Heart left ventricle (tissue), 16 donors: ENCODE measurements at regions of chr22 and their contacts with region 1.

Region 1: GRCh38 chr22:37544955-37545699 is 15.2 kb upstream of the CDC42EP1 start:
- DNase-seq: peak; percentile 72 to 80 (median 75)
- ATAC-seq: peak; percentile 18 to 63 (median 54)
- H3K4me3 ChIP-seq: peak overlapping the region in 9 of 12 donors; percentile 16 to 40 (median 29)
- H3K27ac ChIP-seq: peak overlapping the region; percentile 75 to 97 (median 90)
- H3K4me1 ChIP-seq: peaks cover 3 to 53% (median 38%) of the 10 kb centered on the region in 12 donors
- H3K27me3 ChIP-seq: no peaks in the 10 kb centered on the region
- CTCF ChIP-seq: peak; percentile 56 to 79 (median 72)
- POLR2A ChIP-seq: no peak

Region 2: DNA sequence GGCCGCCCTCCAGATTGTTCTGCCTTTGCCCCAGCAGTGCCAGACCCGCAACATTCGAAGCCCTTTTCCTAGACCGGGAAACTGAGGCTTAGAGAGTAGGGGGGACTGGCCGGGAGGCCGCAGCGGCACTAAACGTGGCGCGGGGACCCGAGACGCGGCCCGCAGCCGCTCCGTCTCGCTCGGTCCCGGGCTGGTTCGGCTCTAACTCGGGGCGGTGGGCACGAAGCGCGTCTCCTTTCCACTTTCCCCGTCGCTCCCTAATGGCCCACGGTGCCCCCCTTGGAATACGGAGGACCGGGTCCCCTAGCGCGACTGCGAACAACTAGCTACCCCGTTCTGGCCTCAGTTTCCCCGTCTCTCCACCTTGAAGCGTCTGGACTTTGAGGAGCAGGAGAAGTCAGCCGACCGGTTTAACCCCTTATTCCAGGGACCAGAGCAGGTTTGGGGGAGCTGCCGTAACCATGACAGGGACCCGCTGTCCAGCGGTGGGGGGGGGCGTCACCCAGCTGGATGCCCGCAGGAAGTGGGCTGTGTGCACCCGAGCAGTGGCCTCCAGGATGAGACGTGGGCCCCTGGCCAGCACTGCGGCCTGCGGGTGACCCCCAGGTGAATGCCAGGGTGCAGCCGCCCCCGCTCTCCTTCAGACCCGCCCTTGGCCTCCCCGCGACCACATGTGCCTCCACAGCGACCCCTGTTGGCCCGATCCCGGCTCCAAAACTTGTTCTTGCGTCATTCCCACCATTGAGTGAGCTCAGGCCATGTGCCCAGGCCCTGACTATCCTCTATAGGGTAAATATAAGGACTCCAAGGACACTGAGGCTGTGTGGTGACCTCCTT is 16.3 kb after region 1 on chr22:
- intact Hi-C with region 1: loop called in 7 of 10 experiments (anchors 1 to 2 kb)
- DNase-seq: peak; percentile 89 to 93 (median 92)
- ATAC-seq: peak; percentile 56 to 76 (median 66)
- H3K4me3 ChIP-seq: peak overlapping the region; percentile 60 to 93 (median 68)
- H3K27ac ChIP-seq: peak overlapping the region; percentile 90 to 100 (median 97)
- H3K4me1 ChIP-seq: peaks cover 18 to 93% (median 72%) of the 10 kb centered on the region in 12 donors
- H3K27me3 ChIP-seq: peaks cover 0 to 30% (median 0%) of the 10 kb centered on the region in 9 donors
- CTCF ChIP-seq: peak; percentile 75 to 93 (median 84)
- POLR2A ChIP-seq: no peak

Region 3: GRCh38 chr22:37566903-37567820 is 22.0 kb after region 1 on chr22:
- intact Hi-C with region 1: loop called in 6 of 10 experiments (anchors 1 to 2 kb)
- DNase-seq: peak; percentile 75 to 91 (median 79)
- ATAC-seq: peak; percentile 32 to 67 (median 50)
- H3K4me3 ChIP-seq: no peak overlapping the region
- H3K27ac ChIP-seq: peak overlapping the region in 10 of 12 donors; percentile 43 to 100 (median 64)
- H3K4me1 ChIP-seq: peaks cover 12 to 85% (median 62%) of the 10 kb centered on the region in 12 donors
- H3K27me3 ChIP-seq: peaks cover 0 to 6% (median 0%) of the 10 kb centered on the region in 9 donors
- CTCF ChIP-seq: peak; percentile 89 to 97 (median 92)
- POLR2A ChIP-seq: no peak

Region 4: GRCh38 chr22:37832022-37832857 is 287.1 kb after region 1 on chr22:
- intact Hi-C with region 1: no loop called
- DNase-seq: no peak
- ATAC-seq: no peak
- H3K4me3 ChIP-seq: no peak overlapping the region
- H3K27ac ChIP-seq: no peak overlapping the region
- H3K4me1 ChIP-seq: peaks cover 0 to 4% (median 0%) of the 10 kb centered on the region in 12 donors
- H3K27me3 ChIP-seq: no peaks in the 10 kb centered on the region
- CTCF ChIP-seq: no peak
- POLR2A ChIP-seq: no peak